Spleen (tissue), 13 donors: ENCODE measurements at regions of chr7 and their contacts with region 1.

Region 1: GRCh38 chr7:64562626-64563275 is at the start of gene ZNF680:
- DNase-seq: peak; percentile 94
- H3K4me3 ChIP-seq: peak within 1 kb of the TSS; percentile 52 to 98 (median 82)
- H3K27ac ChIP-seq: peak within 1 kb of the TSS; percentile 67 to 90 (median 86)
- H3K4me1 ChIP-seq: peaks cover 2 to 58% (median 42%) of the 10 kb centered on the region in 6 donors
- H3K27me3 ChIP-seq: no peaks in the 10 kb centered on the region
- CTCF ChIP-seq: no peak
- POLR2A ChIP-seq: peak in 1 of 3 donors; percentile 57
- total RNA-seq, gene ZNF680: 19.4 to 47.8 (median 25.7) TPM

Region 2: DNA sequence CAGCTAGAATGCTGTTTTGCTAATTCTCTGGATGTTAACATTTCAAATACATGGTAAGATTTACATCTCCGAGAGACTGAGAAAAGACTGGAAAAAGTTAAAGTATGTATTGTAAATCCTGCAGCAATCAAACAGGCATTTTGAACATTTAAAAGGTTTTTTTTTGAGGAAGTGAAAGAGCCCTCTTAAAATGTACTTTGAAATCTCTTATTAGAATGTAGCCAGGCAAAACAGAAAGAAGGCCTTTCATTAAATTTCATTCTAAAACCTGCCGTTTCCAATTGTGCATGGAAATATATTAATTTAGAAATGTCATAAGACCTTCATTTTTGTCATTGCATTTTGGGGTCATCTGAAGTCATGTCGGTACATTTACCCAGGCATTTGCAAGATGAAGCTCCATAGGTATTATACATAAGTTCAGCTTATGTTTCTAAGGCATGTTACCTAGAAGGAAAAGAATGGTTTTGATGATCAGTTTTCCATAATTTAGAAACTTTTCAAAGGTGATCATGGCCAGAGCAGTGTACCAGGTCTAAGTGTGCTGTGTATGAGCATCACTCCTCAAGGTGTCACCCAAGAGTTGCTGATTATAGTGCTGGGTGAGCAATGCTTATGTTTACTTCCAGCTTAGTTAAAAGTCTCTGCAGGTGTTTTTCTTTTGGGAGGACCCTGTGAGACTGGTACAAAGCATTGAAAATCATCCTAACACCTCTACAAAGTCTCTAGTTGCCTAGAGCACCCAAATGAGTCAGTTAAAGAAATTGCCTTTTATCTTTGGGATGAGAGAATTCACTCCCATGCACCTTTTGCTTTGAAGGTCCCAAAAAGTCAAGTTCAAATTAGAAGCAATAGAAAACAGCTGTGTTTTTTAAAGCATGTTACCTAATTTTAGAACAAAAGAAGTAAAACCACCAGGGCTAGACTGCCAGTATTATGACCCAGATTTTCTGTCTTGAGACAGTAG is 241.9 kb before region 1 on chr7:
- intact Hi-C with region 1: loop called (anchors 5 kb)
- DNase-seq: no peak
- H3K4me3 ChIP-seq: no peak overlapping the region
- H3K27ac ChIP-seq: peak overlapping the region in 3 of 8 donors; percentile 15 to 40 (median 32)
- H3K4me1 ChIP-seq: peaks cover 1 to 33% (median 13%) of the 10 kb centered on the region in 6 donors
- H3K27me3 ChIP-seq: no peaks in the 10 kb centered on the region
- CTCF ChIP-seq: no peak
- POLR2A ChIP-seq: no peak

Region 3: DNA sequence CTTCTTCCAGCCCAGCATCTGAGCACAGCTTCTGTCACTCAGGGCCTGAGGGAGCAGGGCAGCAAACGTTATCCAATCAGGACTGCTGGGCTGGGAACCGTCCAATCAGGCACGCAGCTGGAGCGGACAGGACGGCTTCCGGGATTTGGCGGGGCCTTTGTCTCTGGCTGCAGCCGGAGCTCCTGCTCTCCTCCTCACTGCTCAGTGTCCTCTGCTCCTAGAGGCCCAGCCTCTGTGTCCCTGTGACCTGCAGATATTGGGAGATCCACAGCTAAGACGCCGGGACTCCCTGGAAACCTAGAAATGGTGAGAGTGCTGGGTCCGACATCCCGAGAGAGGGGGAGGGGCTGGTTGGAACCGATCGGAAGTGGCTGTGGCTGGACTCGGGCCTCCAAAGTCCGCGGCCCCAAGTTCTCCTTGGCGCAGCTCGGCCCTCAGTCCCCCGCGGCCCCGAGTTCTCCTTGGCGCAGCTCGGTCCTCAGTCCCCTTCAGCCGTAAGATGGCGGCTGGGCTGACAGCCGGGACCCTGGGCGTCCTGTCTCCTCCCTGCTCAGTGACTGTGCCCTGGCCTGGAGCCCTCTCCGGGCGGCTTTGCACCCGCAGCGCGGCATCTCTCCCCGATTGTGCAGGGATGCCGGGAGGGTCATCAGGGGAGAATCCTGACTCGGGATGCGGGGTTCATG is 103.4 kb after region 1 on chr7 and contains the start of gene ZNF107:
- intact Hi-C with region 1: loop called (anchors 10 kb)
- DNase-seq: peak; percentile 96
- H3K4me3 ChIP-seq: peak within 1 kb of the TSS; percentile 65 to 83 (median 78)
- H3K27ac ChIP-seq: peak within 1 kb of the TSS; percentile 65 to 91 (median 88)
- H3K4me1 ChIP-seq: peaks cover 24 to 65% (median 38%) of the 10 kb centered on the region in 6 donors
- H3K27me3 ChIP-seq: no peaks in the 10 kb centered on the region
- CTCF ChIP-seq: no peak
- POLR2A ChIP-seq: peak in 2 of 3 donors; percentile 4 to 24
- total RNA-seq, gene ZNF107: 16.4 to 52.5 (median 19.4) TPM

Region 4: DNA sequence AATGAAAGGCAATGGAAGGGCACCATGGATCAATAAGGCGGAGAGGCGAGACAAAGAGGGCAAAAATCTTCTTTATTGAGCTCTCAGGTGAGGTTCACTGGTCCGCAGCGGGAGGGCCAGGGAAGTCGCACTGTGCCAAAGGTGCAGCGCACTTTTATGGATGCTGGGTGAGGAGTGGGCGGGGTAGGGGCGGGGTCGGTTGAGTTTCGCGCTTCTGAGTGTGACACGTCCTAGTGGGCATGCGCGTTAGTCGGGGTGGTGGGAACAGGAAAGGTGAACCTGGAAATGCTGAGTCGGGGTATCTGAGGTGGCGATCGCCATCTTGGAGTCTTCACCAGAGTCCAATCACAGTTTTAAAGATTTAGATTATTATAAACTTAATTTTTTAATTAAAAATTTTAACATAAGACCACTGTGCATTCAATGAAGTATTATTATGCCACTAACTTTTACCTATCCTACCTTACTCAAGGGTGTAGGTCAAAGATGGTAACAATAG is 277.1 kb after region 1 on chr7:
- intact Hi-C with region 1: no loop called
- DNase-seq: no peak
- H3K4me3 ChIP-seq: no peak overlapping the region
- H3K27ac ChIP-seq: no peak overlapping the region
- H3K4me1 ChIP-seq: no peaks in the 10 kb centered on the region
- H3K27me3 ChIP-seq: no peaks in the 10 kb centered on the region
- CTCF ChIP-seq: no peak
- POLR2A ChIP-seq: no peak